Panc1 (cell line): ENCODE measurements at regions of chr5 and their contacts with region 1.

Region 1: DNA sequence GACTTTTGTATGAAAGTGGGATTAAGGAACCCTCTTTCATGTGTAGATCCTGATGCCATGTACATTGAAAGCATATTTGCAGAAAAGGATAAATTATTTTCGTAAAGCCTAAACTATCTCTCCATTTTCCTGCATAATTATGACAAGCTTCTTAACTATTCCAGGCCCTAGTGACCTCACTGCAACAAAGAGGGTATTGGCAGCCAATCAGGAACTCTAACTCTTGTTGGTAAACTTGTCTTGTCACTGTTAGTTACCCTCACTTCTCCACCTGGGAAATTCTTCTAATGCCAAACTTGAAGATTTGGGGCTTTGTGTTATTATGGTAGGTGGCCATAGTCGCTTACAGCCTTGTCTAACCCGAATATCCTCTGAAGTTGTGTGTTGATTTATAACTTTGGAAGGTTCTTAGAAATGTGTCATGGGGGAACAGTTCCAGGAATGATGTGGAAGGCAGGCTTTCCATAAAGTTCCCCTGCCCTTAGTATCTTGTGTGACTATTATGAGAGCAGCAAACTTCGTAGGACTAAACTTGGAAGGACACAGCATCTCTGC is 52.5 kb downstream of the IQGAP2 start:
- DNase-seq: no peak
- ATAC-seq: no peak
- H3K4me3 ChIP-seq: no peak overlapping the region
- H3K27ac ChIP-seq: no peak overlapping the region
- H3K4me1 ChIP-seq: no peaks in the 10 kb centered on the region
- H3K27me3 ChIP-seq: peaks cover 12% of the 10 kb centered on the region; the same call in 1 of the 2 replicates
- CTCF ChIP-seq: no peak

Region 2: GRCh38 chr5:74897049-74897448 is 1558.6 kb before region 1 on chr5:
- CTCF ChIA-PET with region 1: no interaction called
- POLR2A ChIA-PET with region 1: interaction called, 14 read pairs
- in situ Hi-C with region 1: no loop called
- intact Hi-C with region 1: no loop called
- DNase-seq: no peak
- ATAC-seq: no peak
- H3K4me3 ChIP-seq: no peak overlapping the region
- H3K27ac ChIP-seq: no peak overlapping the region; the same call in 1 of the 2 replicates
- H3K4me1 ChIP-seq: no peaks in the 10 kb centered on the region
- H3K27me3 ChIP-seq: no peaks in the 10 kb centered on the region
- CTCF ChIP-seq: no peak

Region 3: DNA sequence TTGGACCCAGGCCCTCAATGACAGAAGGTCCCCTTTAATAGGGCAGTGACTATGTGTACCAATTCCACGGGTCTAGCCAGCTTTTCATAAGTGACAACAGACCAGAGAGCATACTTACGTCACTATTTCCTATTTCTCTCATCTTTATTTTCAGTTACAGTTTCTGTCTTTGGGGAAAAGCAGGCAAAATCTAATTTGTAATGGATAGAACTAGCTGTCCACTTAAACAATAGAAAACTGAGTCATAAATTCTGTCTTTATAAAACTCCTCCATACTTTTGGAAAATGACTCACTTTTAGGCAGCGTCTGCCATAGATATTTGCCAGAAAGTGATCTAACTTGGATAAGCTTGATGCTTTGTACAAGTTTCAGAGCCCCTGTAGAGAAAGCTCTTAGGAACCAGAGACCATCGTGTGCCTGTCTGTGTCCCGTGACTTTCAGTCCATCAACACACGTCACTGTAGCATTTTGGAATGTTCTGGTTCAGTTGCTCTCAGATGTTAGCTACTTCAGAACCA is 65.7 kb after region 1 on chr5:
- CTCF ChIA-PET with region 1: no interaction called
- POLR2A ChIA-PET with region 1: interaction called, 12 read pairs
- in situ Hi-C with region 1: no loop called
- intact Hi-C with region 1: no loop called
- DNase-seq: no peak
- ATAC-seq: no peak
- H3K4me3 ChIP-seq: no peak overlapping the region
- H3K27ac ChIP-seq: no peak overlapping the region
- H3K4me1 ChIP-seq: no peaks in the 10 kb centered on the region
- H3K27me3 ChIP-seq: peaks cover 15% of the 10 kb centered on the region
- CTCF ChIP-seq: no peak

Region 4: GRCh38 chr5:76556511-76557221 is 101.1 kb after region 1 on chr5:
- CTCF ChIA-PET with region 1: no interaction called
- POLR2A ChIA-PET with region 1: no interaction called
- in situ Hi-C with region 1: no loop called
- intact Hi-C with region 1: no loop called
- DNase-seq: no peak
- ATAC-seq: no peak
- H3K4me3 ChIP-seq: no peak overlapping the region
- H3K27ac ChIP-seq: no peak overlapping the region
- H3K4me1 ChIP-seq: no peaks in the 10 kb centered on the region
- H3K27me3 ChIP-seq: peaks cover 10% of the 10 kb centered on the region
- CTCF ChIP-seq: no peak

Region 5: GRCh38 chr5:76715736-76716455 is 260.3 kb after region 1 on chr5 and contains the start of gene F2R:
- CTCF ChIA-PET with region 1: no interaction called
- POLR2A ChIA-PET with region 1: no interaction called
- in situ Hi-C with region 1: no loop called
- intact Hi-C with region 1: no loop called
- DNase-seq: no peak
- ATAC-seq: peak; percentile 92
- H3K4me3 ChIP-seq: peak within 1 kb of the TSS; percentile 83 to 91
- H3K27ac ChIP-seq: peak within 1 kb of the TSS; percentile 80
- H3K4me1 ChIP-seq: peaks cover 12% of the 10 kb centered on the region; the same call in 1 of the 2 replicates
- H3K27me3 ChIP-seq: peaks cover 2% of the 10 kb centered on the region; the same call in 1 of the 2 replicates
- CTCF ChIP-seq: peak; percentile 87
- total RNA-seq, gene F2R: 26.0 TPM